MCF 10A (cell line): ENCODE measurements at regions of chr15 and their contacts with region 1.

Region 1: DNA sequence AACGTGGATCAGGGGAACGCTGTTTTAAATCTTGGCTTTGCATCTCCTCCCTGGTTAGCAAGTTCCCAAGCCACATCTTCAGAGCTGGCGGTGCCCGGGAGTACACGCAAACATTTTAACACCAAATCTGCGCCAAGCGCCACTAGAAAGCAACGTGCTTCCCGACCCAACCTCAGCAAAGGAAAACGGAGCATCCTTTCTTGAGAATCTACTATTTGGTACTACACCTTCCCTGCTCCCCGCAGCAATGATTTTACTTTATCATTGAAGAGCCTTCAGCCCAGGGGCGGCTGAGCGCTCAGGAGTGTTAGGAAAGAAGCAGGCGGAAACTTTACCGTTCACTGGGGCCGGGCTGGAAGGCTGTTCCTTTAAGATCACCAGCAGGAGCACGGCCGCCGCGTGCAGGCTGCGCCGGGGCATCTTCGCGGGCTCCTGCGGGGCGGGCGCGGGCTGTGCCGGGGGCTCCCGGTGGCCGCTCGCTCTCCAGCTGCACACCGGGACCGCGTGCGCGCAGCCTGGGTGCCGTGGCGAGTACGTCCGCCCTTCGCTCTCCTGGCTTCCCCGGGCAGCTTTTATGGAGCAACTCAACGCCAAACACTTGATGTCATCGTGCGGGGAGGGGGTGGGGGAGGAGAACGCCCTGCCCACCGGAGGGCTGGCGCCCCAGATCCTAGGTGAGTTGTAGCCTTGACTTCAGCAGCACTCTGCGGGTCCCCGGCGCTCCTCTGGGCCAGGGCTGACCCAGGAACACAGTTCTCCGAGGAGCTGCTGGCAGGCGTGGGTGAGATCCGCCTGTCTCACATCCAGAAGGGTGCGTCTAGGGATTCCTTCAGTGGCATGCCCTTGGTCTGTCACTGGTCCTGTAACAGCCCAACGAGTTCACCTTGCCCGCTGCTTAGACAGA is at the start of gene CA12:
- DNase-seq: peak; percentile 54
- H3K4me3 Mint-ChIP-seq: peak within 1 kb of the TSS; percentile 82
- H3K27ac Mint-ChIP-seq: peak within 1 kb of the TSS; percentile 85
- H3K4me1 Mint-ChIP-seq: peaks cover 30% of the 10 kb centered on the region
- H3K27me3 Mint-ChIP-seq: no peaks in the 10 kb centered on the region
- CTCF ChIP-seq: no peak
- total RNA-seq, gene CA12: 19.6 and 20.3 TPM in 2 replicates

Region 2: GRCh38 chr15:63089260-63090043 is 292.1 kb before region 1 on chr15:
- CTCF ChIA-PET with region 1: no interaction called
- POLR2A ChIA-PET with region 1: no interaction called
- intact Hi-C with region 1: no loop called
- DNase-seq: peak; percentile 45
- H3K4me3 Mint-ChIP-seq: no peak overlapping the region
- H3K27ac Mint-ChIP-seq: no peak overlapping the region
- H3K4me1 Mint-ChIP-seq: no peaks in the 10 kb centered on the region
- H3K27me3 Mint-ChIP-seq: no peaks in the 10 kb centered on the region
- CTCF ChIP-seq: no peak

Region 3: DNA sequence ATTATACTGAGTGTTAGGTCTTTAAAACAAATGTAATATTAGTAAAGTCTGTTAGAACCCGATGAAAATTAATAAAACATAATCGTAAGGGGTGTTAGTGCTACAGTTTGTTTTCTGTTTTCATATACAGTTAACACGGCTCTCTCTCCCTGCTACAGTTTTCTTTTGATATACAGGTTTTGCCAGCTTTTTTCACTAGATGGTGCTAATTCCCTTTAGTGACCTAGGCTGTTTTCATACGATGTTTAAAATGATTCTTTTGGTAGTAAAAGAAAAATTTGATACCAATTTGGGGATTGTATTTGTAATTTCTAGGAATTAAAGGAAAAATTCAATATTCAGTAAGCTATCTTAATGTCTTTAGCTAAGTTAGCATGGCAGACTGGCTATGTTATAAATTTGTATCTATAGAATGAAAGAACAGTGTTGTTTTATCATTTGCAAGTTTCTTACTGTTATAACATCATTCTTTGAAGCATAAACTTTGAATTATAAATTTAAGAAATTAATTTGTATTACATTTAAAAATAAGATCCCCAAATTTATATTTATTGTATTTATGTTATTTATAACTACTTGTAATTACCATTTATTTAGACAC is 92.7 kb before region 1 on chr15:
- CTCF ChIA-PET with region 1: interaction called, 5 read pairs
- POLR2A ChIA-PET with region 1: no interaction called
- intact Hi-C with region 1: loop called (anchors 5 kb)
- DNase-seq: peak; percentile 67
- H3K4me3 Mint-ChIP-seq: no peak overlapping the region
- H3K27ac Mint-ChIP-seq: no peak overlapping the region
- H3K4me1 Mint-ChIP-seq: no peaks in the 10 kb centered on the region
- H3K27me3 Mint-ChIP-seq: no peaks in the 10 kb centered on the region
- CTCF ChIP-seq: peak; percentile 61

Region 4: GRCh38 chr15:63332367-63333124 is 49.0 kb before region 1 on chr15:
- CTCF ChIA-PET with region 1: no interaction called
- POLR2A ChIA-PET with region 1: interaction called, 15 read pairs
- intact Hi-C with region 1: loop called (anchors 5 kb)
- DNase-seq: peak; percentile 97
- H3K4me3 Mint-ChIP-seq: peak overlapping the region; percentile 2
- H3K27ac Mint-ChIP-seq: peak overlapping the region; percentile 13
- H3K4me1 Mint-ChIP-seq: peaks cover 20% of the 10 kb centered on the region
- H3K27me3 Mint-ChIP-seq: no peaks in the 10 kb centered on the region
- CTCF ChIP-seq: no peak